Left colon (tissue), 2 donors: ENCODE measurements at regions of chr7 and their contacts with region 1.

Region 1: DNA sequence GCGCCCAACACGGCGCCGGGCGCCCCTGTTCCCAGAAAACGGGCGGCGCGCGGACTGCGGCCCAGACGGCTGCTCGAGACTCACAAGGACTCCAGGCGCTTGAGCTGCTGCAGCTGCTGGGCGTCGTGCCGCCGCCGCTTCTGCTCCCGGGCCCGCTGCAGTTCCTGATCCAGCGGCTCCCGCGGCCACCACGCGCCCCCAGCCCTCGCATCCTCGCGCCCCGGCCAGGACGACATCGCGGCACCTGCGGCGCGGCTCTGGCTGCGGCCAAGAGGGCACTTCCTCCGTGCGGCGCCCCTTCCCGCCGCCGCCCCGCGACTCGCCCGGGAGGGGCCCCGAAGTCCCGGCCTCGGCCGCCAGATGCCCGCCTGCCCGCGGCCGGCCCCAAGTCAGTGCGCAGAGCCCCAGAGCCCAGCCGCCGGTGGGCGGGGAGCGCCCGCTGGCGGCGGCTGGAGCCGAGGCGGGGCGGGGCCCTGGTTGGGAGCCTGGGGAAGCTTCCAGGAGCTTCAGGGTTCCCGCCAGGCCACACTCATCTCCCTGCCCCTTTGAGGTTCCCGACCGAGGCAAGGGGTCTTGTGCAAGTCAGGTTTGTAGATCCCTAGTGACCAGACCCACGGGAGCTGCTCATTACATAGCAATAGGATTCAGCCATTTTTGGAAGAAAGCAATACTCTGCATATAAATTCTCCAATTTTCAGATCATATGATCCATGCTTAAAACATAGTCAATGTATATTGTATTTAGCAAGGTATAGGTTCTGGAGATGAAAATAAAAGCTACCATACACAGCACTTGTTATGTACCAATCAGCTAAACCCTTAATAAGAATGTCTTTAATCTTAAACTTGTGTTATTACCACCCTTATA is 14.2 kb upstream of the FKBP9 start:
- DNase-seq: peak; percentile 76 to 86
- ATAC-seq: peak; percentile 94

Region 2: GRCh38 chr7:33050535-33051318 is 107.7 kb after region 1 on chr7:
- intact Hi-C with region 1: loop called in 1 of 2 experiments (anchors 10 kb)
- DNase-seq: no peak
- ATAC-seq: peak; percentile 88